ENCODE measurements at regions of chr1 and their contacts with region 1.

Region 1: GRCh38 chr1:181424786-181425403 is 58.4 kb upstream of the CACNA1E start:
- DNase-seq: peak; percentile 93
- H3K4me3 Mint-ChIP-seq: peak overlapping the region; percentile 50
- H3K27ac Mint-ChIP-seq: no peak overlapping the region
- H3K4me1 Mint-ChIP-seq: peaks cover 4% of the 10 kb centered on the region
- H3K27me3 Mint-ChIP-seq: peaks cover 25% of the 10 kb centered on the region

Region 2: GRCh38 chr1:181189691-181190363 is 235.1 kb before region 1 on chr1:
- intact Hi-C with region 1: loop called (anchors 1 kb)
- DNase-seq: peak; percentile 95
- H3K4me3 Mint-ChIP-seq: no peak overlapping the region
- H3K27ac Mint-ChIP-seq: no peak overlapping the region
- H3K4me1 Mint-ChIP-seq: peaks cover 2% of the 10 kb centered on the region
- H3K27me3 Mint-ChIP-seq: peaks cover 23% of the 10 kb centered on the region

Region 3: DNA sequence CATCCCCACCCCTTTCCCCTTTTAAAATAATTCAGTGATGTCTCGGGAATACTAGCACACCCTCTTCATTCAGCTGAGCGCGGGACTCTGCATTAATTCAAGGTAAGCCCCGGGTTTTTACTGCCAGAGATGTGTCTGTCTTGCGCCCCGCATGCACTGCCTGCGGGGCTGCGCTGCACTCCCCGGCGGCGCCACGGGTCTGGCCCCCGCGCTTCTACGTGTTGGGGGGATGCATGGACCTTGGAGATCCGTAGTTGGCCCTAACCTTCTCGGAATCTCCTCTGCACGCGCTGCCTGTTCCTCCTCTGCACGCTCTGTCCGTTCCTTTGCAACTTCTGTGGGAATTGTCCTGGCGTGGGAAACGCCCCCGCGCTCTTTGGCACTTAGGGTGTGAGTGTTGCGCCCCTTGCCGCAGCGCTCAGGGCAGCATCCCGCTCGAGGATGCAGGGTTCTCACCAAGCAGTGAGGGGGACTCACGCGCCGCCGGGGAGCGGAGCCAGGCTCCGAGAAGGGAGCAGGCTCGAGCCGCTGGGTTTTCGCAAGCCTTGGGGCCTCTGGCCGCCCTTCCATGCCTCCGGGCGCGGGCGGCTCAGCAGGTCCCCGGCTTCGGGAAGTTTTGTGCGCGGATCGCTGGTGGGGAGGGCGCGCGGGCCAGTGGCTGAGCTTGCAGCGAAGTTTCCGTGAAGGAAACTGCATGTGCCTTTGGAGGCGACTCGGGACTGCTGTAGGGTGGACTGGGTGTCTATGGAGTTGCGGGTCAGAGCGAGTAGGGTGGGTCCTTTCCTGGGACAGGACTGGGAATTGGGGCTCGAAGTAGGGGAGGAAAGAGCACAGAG is 106.7 kb before region 1 on chr1:
- intact Hi-C with region 1: loop called (anchors 5 kb)
- DNase-seq: no peak
- H3K4me3 Mint-ChIP-seq: peak overlapping the region; percentile 62
- H3K27ac Mint-ChIP-seq: peak overlapping the region; percentile 7
- H3K4me1 Mint-ChIP-seq: peaks cover 22% of the 10 kb centered on the region
- H3K27me3 Mint-ChIP-seq: peaks cover 69% of the 10 kb centered on the region

Region 4: DNA sequence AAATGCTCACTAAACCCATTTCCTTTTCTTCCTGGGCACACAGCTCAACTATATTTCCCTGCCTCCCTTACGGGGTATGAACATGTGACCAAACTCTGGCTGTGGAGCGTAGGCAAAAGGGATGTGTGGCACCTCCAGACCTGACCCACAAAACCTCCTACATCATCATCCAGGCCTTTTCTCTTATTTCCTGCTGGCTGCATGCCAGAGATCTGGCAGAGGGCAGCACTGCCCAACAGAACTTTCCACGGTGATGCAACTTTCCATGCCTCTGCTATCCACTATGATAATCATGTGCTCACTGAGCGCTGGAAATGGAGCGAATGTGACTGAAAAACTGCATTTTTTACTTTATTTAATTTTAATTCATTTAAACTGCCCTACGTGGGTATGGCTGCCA is 41.2 kb before region 1 on chr1:
- intact Hi-C with region 1: loop called (anchors 5 kb)
- DNase-seq: no peak
- H3K4me3 Mint-ChIP-seq: no peak overlapping the region
- H3K27ac Mint-ChIP-seq: no peak overlapping the region
- H3K4me1 Mint-ChIP-seq: no peaks in the 10 kb centered on the region
- H3K27me3 Mint-ChIP-seq: peaks cover 4% of the 10 kb centered on the region

Region 5: GRCh38 chr1:181397845-181398244 is 27.1 kb before region 1 on chr1:
- intact Hi-C with region 1: no loop called
- DNase-seq: peak; percentile 81
- H3K4me3 Mint-ChIP-seq: peak overlapping the region; percentile 63
- H3K27ac Mint-ChIP-seq: peak overlapping the region; percentile 87
- H3K4me1 Mint-ChIP-seq: peaks cover 39% of the 10 kb centered on the region
- H3K27me3 Mint-ChIP-seq: no peaks in the 10 kb centered on the region

Region 6: GRCh38 chr1:181413195-181413815 is 11.6 kb before region 1 on chr1:
- intact Hi-C with region 1: no loop called
- DNase-seq: no peak
- H3K4me3 Mint-ChIP-seq: no peak overlapping the region
- H3K27ac Mint-ChIP-seq: no peak overlapping the region
- H3K4me1 Mint-ChIP-seq: no peaks in the 10 kb centered on the region
- H3K27me3 Mint-ChIP-seq: no peaks in the 10 kb centered on the region

Measured in activated CD4-positive, alpha-beta T cell treated with anti-CD3 and anti-CD28 coated beads, Interleukin-2, amount 10 ng/mL, durations not matched to agents 24 days and 14 days (primary cell).